ENCODE measurements at regions of chr3 and their contacts with region 1.

Region 1: DNA sequence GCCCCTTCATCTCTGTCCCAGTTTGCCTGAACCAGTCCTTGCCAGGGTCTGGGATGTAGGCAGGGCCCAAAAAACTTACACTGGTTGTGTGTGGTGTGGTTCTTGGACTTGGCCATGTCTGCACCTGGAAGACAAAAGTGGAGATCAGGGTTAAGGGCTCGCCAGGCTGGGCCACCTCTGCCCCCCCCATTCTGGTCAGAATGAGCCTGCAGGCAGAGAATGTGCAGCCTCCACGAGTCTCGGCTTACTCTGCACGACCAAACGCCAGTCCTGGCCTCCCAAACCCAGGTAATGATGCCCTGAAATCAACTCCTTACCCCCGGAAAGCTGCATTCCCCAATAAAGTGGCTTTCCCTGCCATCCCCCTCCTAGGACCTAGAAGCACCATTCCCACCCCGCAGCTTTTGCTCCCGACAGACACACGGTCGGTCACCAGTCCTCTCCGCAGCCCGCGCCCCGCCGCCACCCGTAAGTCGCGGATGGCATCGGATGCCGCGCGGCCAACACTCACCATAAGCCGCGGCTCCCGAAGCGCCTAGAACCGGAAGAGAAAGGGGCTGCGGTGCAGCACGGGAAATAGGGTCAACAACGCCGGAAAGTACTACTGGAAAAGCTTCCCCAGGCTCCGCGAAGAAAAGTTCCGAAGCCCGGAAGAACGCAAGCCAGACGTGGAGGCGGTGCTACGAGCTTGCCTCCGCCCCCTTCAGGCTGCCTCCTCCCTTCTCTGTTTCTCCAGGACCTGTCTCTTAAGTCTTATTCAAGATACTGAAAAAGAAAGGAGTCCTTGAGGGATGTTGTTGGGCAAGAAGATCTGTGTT is at the start of gene RPL29:
- DNase-seq: peak; percentile 96
- H3K4me3 Mint-ChIP-seq: peak within 1 kb of the TSS; percentile 98
- H3K27ac Mint-ChIP-seq: peak within 1 kb of the TSS; percentile 99
- H3K4me1 Mint-ChIP-seq: peaks cover 34% of the 10 kb centered on the region
- H3K27me3 Mint-ChIP-seq: no peaks in the 10 kb centered on the region
- total RNA-seq, gene RPL29: 1,502 to 1,507 TPM

Region 2: GRCh38 chr3:51974963-51975851 is 20.3 kb before region 1 on chr3 and contains the start of gene ABHD14A:
- CTCF ChIA-PET with region 1: interaction called, 11 read pairs
- POLR2A ChIA-PET with region 1: interaction called, 6 read pairs
- intact Hi-C with region 1: loop called (anchors 2 kb)
- DNase-seq: peak; percentile 79
- H3K4me3 Mint-ChIP-seq: peak within 1 kb of the TSS; percentile 99
- H3K27ac Mint-ChIP-seq: peak within 1 kb of the TSS; percentile 97
- H3K4me1 Mint-ChIP-seq: peaks cover 36% of the 10 kb centered on the region
- H3K27me3 Mint-ChIP-seq: no peaks in the 10 kb centered on the region
- total RNA-seq, gene ABHD14A: 7.9 to 8.6 TPM

Region 3: GRCh38 chr3:51982782-51983577 is 12.6 kb before region 1 on chr3 and contains the start of gene ACY1:
- CTCF ChIA-PET with region 1: interaction called, 42 read pairs
- POLR2A ChIA-PET with region 1: interaction called, 45 read pairs
- intact Hi-C with region 1: loop called (anchors 1 kb)
- DNase-seq: peak; percentile 85
- H3K4me3 Mint-ChIP-seq: peak within 1 kb of the TSS; percentile 88
- H3K27ac Mint-ChIP-seq: peak within 1 kb of the TSS; percentile 88
- H3K4me1 Mint-ChIP-seq: peaks cover 28% of the 10 kb centered on the region
- H3K27me3 Mint-ChIP-seq: no peaks in the 10 kb centered on the region
- total RNA-seq, gene ACY1: 53.1 to 59.2 TPM

Region 4: GRCh38 chr3:52154117-52155094 is 158.9 kb after region 1 on chr3 and contains the start of gene POC1A:
- CTCF ChIA-PET with region 1: interaction called, 9 read pairs
- POLR2A ChIA-PET with region 1: interaction called, 10 read pairs
- intact Hi-C with region 1: no loop called
- DNase-seq: peak; percentile 94
- H3K4me3 Mint-ChIP-seq: peak within 1 kb of the TSS; percentile 88
- H3K27ac Mint-ChIP-seq: peak within 1 kb of the TSS; percentile 89
- H3K4me1 Mint-ChIP-seq: peaks cover 20% of the 10 kb centered on the region
- H3K27me3 Mint-ChIP-seq: no peaks in the 10 kb centered on the region
- total RNA-seq, gene POC1A: 28.5 to 30.5 TPM

Region 5: GRCh38 chr3:52596658-52597265 is 601.2 kb after region 1 on chr3:
- CTCF ChIA-PET with region 1: no interaction called
- POLR2A ChIA-PET with region 1: no interaction called
- intact Hi-C with region 1: no loop called
- DNase-seq: no peak
- H3K4me3 Mint-ChIP-seq: no peak overlapping the region
- H3K27ac Mint-ChIP-seq: no peak overlapping the region
- H3K4me1 Mint-ChIP-seq: no peaks in the 10 kb centered on the region
- H3K27me3 Mint-ChIP-seq: no peaks in the 10 kb centered on the region

Region 6: DNA sequence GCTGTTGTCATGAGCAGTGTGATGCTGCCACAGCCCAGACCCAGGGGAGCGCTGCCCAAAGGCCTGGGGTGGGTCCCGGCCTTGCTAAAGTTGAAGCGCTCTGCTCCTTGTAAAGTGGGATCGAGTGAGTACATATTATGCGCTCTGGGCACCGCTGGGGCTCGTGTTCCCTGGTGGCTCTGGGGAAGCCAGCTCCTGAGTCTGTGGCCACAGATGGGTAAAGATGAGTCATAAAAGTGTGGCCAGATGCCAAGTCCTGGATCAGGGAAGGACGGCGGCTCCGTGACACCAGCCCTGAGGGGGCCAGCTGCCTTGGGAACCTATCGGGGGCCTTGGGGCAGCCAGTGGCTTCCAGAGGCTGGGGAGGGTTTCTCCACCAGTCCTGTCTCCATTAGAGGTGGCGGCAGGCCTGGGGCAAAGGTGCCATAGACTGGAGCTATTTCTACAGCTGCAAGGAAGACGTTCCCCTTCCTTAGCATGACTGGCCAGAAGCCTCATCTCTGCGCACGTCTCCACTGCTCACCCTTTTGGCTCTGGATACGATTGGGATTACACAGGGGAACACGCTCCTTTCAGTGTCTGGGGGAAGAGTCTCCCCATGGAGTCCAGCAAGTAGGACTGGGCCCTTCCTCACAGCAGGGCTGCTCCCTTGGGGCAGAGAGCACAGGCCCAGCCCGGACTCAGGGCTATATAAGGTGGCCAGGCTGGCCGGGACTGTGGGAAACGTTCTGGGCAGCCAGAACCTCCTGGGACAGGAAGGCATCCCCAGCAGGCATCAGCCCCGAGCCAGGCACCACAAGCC is 836.1 kb after region 1 on chr3:
- CTCF ChIA-PET with region 1: no interaction called
- POLR2A ChIA-PET with region 1: no interaction called
- intact Hi-C with region 1: no loop called
- DNase-seq: no peak
- H3K4me3 Mint-ChIP-seq: no peak overlapping the region
- H3K27ac Mint-ChIP-seq: no peak overlapping the region
- H3K4me1 Mint-ChIP-seq: no peaks in the 10 kb centered on the region
- H3K27me3 Mint-ChIP-seq: no peaks in the 10 kb centered on the region